Gastrocnemius medialis (tissue), 4 donors: ENCODE measurements at regions of chr12 and their contacts with region 1.

Region 1: GRCh38 chr12:4604684-4605193 is 42.7 kb downstream of the DYRK4 start:
- DNase-seq: peak; percentile 72 to 75
- ATAC-seq: peak; percentile 99 to 100
- H3K4me3 ChIP-seq: peak overlapping the region; percentile 85 to 94 (median 89)
- H3K27ac ChIP-seq: peak overlapping the region; percentile 73 to 87 (median 82)
- H3K4me1 ChIP-seq: peaks cover 8 to 19% of the 10 kb centered on the region in 2 donors
- H3K27me3 ChIP-seq: no peaks in the 10 kb centered on the region
- CTCF ChIP-seq: peak; percentile 75 to 95 (median 91)
- POLR2A ChIP-seq: no peak

Region 2: DNA sequence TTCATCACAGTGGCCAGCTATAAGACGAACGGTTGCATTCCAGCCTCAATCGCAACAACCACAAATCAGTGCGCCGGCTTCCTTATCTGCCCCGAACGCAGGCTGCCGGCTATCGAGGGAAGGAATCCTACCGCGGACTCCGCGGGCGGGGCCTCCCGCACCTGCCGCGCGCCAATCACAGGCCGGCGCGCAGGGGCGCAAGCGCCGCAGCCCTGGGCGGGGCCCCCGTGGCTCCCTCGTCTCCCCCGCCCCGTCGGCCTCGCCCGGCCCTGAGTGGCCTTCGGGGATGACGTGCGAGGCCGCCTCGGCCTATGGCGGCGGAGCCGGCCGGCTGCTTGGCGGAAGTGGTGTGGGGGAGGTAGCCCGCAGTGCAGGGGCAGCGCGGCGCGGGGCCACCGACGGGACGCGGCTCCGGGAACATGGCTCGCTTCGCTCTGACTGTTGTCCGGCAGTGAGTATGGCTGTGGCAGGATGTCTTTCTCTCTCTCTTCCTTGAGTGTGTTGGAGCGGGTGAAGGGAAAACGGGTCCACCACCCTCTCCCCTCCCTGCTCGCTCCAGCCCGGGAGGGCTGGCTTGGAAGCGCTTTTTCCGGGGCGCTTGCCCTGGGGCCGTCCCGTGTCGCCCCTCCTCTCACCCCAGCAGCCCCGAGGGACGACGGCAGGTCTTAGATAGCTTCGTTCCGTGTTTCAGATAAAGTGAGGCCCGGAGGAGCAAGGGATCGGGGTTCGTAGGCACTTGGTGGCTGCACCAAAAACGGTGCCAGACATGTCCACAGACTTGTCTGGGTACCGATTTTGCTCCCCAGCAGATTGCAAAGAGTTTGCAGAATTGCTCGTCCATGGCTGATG is 283.7 kb before region 1 on chr12 and contains the start of gene TIGAR:
- in situ Hi-C with region 1: no loop called
- intact Hi-C with region 1: loop called (anchors 1 kb)
- DNase-seq: peak; percentile 87 to 91
- ATAC-seq: peak; percentile 92 to 96
- H3K4me3 ChIP-seq: peak within 1 kb of the TSS; percentile 84 to 94 (median 92)
- H3K27ac ChIP-seq: peak within 1 kb of the TSS; percentile 88 to 95 (median 92)
- H3K4me1 ChIP-seq: peaks cover 13 to 19% of the 10 kb centered on the region in 2 donors
- H3K27me3 ChIP-seq: no peaks in the 10 kb centered on the region
- CTCF ChIP-seq: no peak
- POLR2A ChIP-seq: peak; percentile 91
- total RNA-seq, gene TIGAR: 4.4 to 8.3 (median 6.7) TPM

Region 3: GRCh38 chr12:4346931-4347330 is 257.8 kb before region 1 on chr12:
- in situ Hi-C with region 1: no loop called
- intact Hi-C with region 1: no loop called
- DNase-seq: no peak
- ATAC-seq: no peak
- H3K4me3 ChIP-seq: no peak overlapping the region
- H3K27ac ChIP-seq: no peak overlapping the region
- H3K4me1 ChIP-seq: no peaks in the 10 kb centered on the region
- H3K27me3 ChIP-seq: no peaks in the 10 kb centered on the region
- CTCF ChIP-seq: no peak
- POLR2A ChIP-seq: no peak

Region 4: DNA sequence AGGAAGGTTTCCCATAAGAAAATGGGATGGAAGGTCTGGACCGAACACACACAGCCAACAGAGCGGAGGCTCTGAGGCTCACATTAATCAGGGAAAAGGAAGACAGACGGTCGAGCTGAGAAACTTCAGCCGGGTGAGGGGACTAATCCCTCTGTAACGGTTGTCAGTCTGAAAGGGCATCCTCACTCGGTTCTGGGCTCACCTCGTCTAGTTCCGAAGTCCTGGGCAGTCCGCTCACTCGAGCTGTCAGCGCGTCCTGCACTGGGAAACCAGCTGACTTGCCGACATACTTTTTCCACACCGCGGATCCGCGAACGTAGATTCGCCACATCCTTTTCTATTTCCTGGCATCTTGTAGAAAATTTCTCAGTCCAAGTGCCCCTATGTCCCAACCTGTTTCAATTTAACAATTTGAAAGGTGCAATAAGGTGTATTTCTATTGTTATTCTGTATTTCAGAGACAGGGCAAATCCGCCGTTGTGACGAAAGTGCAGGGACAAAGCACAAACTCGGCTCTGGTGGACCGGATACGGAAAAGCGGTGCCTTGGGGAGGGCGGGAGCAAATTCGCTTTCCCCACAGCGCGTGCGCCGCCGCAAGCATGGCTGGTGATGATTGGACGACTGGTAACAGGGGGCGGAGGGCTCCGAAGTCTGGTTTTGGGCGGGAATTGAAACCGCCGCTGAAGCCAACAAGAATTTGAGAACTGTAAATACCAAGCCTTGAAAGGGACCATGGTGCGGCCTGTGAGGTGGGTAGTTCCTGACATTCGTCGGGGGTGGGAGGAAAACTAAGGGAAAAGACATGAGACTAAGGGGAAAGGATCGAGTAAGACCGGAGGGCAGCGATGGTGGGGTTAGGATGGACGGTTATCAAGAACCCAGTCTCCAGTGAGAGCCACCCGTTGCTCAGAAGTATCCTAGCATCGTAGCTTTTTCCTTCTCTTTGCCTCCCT is 66.3 kb before region 1 on chr12 and contains the start of gene RAD51AP1:
- in situ Hi-C with region 1: no loop called
- intact Hi-C with region 1: loop called (anchors 5 kb)
- DNase-seq: peak; percentile 87 to 90
- ATAC-seq: peak; percentile 99
- H3K4me3 ChIP-seq: peak within 1 kb of the TSS; percentile 55 to 92 (median 76)
- H3K27ac ChIP-seq: peak within 1 kb of the TSS; percentile 86 to 94 (median 92)
- H3K4me1 ChIP-seq: peaks cover 15 to 16% of the 10 kb centered on the region in 2 donors
- H3K27me3 ChIP-seq: no peaks in the 10 kb centered on the region
- CTCF ChIP-seq: no peak
- POLR2A ChIP-seq: peak; percentile 35 to 51
- total RNA-seq, gene RAD51AP1: 0.65 to 1.7 (median 1.7) TPM in 3 of 4 donors, not detected in the other

Region 5: DNA sequence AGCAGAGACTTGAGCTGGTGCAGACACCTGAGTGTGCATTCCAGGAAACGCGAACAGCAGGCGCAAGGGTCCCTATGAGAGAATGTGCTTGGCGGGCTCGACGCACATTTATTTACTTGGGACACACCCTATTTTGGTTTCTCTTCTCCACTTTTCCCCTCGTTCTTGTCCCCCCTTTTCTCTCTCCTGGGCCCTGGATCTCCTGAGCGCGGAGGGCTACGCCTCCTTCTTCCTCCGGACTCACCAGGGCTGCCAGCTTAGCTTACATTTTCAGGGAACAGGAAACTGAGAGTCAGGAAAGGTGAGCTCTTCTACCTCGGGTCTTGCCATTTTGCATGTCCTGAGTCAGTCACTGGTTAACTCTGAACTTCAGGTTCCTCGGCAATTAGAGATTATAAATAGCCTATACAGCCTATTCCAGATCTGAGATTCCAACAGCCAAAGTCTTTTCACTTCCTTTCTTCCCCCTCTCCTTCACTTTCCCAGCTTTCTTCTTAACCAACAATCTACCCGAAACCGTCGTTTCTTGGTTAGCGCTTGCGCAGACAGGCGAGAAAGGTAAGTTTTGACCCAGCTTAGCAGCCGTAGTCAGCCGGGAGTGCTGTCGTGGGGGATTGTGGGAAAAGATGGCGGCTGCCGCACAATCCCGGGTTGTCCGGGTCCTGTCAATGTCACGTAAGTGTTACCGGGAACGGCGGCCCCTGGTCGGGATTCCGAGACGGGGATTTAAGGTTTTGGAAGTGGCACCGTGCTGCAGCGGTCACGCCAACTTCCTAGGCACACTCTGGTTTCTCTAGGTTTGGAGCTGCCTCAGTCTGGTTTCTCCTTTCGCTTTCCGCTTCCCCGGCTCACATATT is 44.0 kb after region 1 on chr12 and contains the starts of genes AKAP3 and NDUFA9:
- in situ Hi-C with region 1: no loop called
- intact Hi-C with region 1: loop called (anchors 2 kb)
- DNase-seq: peak; percentile 72 to 78
- ATAC-seq: peak; percentile 97
- H3K4me3 ChIP-seq: peak within 1 kb of the TSS; percentile 72 to 90 (median 80)
- H3K27ac ChIP-seq: peak within 1 kb of the TSS; percentile 79 to 92 (median 89)
- H3K4me1 ChIP-seq: peaks cover 44 to 45% of the 10 kb centered on the region in 2 donors
- H3K27me3 ChIP-seq: no peaks in the 10 kb centered on the region
- CTCF ChIP-seq: no peak
- POLR2A ChIP-seq: peak; percentile 34 to 47
- total RNA-seq, gene AKAP3: 0.27 to 1.7 (median 0.71) TPM
- total RNA-seq, gene NDUFA9: 57.9 to 113 (median 69.5) TPM

Region 6: GRCh38 chr12:4763549-4763948 is 158.8 kb after region 1 on chr12:
- in situ Hi-C with region 1: no loop called
- intact Hi-C with region 1: loop called (anchors 2 kb)
- DNase-seq: no peak
- ATAC-seq: no peak
- H3K4me3 ChIP-seq: no peak overlapping the region
- H3K27ac ChIP-seq: no peak overlapping the region
- H3K4me1 ChIP-seq: no peaks in the 10 kb centered on the region
- H3K27me3 ChIP-seq: no peaks in the 10 kb centered on the region
- CTCF ChIP-seq: no peak
- POLR2A ChIP-seq: no peak